Activated CD4-positive, alpha-beta memory T cell treated with anti-CD3 and anti-CD28 coated beads for 36 hours (primary cell): ENCODE measurements at regions of chr10 and their contacts with region 1.

Region 1: DNA sequence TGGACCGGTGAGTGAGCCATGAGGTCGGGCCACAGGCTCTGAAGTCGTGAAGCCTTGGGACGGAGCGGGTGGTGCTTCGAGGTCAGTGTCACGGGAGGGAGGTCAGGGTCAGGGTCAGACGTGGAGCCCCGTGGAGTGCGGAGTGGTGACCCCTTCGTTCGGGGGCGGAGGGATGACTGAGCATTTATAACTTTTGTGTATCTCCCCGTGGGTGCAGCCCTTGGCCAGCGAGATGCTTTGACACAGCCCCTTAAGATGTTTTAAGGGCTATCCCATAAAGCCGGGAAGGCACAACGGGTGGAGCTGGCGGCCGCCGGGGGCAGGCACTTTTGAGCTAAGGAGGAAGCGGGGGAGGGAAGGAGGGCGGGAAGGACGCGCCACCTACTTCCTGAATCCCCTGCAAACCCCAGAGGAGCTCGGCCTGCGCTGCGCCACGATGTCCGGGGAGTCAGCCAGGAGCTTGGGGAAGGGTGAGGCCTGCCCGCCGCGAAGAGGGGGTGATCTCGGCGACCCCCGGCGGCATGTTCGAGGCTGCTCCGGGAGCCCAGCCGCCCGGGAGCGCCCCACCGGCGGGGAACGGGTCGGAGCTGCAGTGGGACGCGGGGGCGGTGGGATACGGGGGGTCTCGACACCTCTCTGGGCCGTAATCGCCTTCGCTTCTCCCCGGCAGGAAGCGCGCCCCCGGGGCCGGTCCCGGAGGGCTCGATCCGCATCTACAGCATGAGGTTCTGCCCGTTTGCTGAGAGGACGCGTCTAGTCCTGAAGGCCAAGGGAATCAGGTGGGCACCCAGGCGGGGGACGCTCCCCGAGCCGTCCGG is at the start of gene GSTO1:
- DNase-seq: peak; percentile 73
- H3K4me3 Mint-ChIP-seq: peak within 1 kb of the TSS; percentile 93
- H3K27ac Mint-ChIP-seq: peak within 1 kb of the TSS; percentile 93
- H3K4me1 Mint-ChIP-seq: peaks cover 50% of the 10 kb centered on the region
- H3K27me3 Mint-ChIP-seq: peaks cover 3% of the 10 kb centered on the region
- total RNA-seq, gene GSTO1: 215 to 225 TPM

Region 2: DNA sequence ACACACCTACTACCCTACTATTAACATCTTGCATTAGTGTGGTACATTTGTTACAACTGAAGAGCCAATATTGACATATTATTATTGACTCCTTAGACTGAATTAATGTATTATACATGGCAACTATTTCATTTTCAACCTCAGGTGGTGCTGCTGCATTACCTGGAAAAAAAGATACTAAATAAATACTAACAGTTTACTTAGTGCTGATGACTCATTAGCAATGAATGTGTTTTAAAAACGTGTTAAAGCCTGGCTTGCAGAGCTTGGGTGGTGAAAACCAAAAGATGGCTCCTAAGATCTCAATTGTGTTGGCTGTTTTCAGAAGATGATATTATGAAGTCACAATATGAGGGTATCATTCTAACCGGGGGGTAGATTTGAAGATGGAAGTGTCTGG is 57.3 kb before region 1 on chr10:
- CTCF ChIA-PET with region 1: no interaction called
- POLR2A ChIA-PET with region 1: no interaction called
- intact Hi-C with region 1: no loop called
- DNase-seq: no peak
- H3K4me3 Mint-ChIP-seq: no peak overlapping the region
- H3K27ac Mint-ChIP-seq: no peak overlapping the region
- H3K4me1 Mint-ChIP-seq: no peaks in the 10 kb centered on the region
- H3K27me3 Mint-ChIP-seq: peaks cover 6% of the 10 kb centered on the region

Region 3: GRCh38 chr10:104231784-104232612 is 22.7 kb before region 1 on chr10 and contains the start of gene CFAP43:
- CTCF ChIA-PET with region 1: no interaction called
- POLR2A ChIA-PET with region 1: interaction called, 4 read pairs
- intact Hi-C with region 1: loop called (anchors 2 kb)
- DNase-seq: peak; percentile 99
- H3K4me3 Mint-ChIP-seq: peak within 1 kb of the TSS; percentile 80
- H3K27ac Mint-ChIP-seq: peak within 1 kb of the TSS; percentile 4
- H3K4me1 Mint-ChIP-seq: peaks cover 11% of the 10 kb centered on the region
- H3K27me3 Mint-ChIP-seq: peaks cover 11% of the 10 kb centered on the region
- total RNA-seq, gene CFAP43: 0.19 to 0.22 TPM